HEK293 (cell line): ENCODE measurements at regions of chr22 and their contacts with region 1.

Region 1: DNA sequence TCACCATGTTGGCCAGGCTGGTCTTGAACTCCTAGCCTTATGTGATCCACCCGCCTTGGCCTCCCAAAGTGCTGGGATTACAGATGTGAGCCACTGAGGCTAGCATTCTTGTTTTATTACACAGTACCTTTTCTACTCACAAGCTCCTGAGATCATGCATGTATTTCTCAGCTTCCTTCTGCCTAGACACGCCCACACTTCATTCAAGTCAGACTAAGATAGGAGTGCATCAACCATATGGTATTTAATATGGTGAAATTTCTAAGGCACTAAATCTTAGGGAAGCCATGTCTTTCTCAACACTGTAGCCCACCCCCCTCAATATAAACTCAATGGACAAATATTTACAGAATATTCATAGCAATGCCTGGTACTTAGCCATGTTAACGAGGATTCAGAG is 62.1 kb downstream of the SLC25A17 start:
- H3K4me3 ChIP-seq: no peak overlapping the region
- H3K27ac ChIP-seq: no peak overlapping the region
- H3K4me1 ChIP-seq: no peaks in the 10 kb centered on the region
- CTCF ChIP-seq: no peak

Region 2: GRCh38 chr22:40499187-40499753 is 257.8 kb before region 1 on chr22:
- CTCF ChIA-PET with region 1: no interaction called
- POLR2A ChIA-PET with region 1: no interaction called
- H3K4me3 ChIP-seq: no peak overlapping the region
- H3K27ac ChIP-seq: peak overlapping the region; percentile 58; the same call in 1 of the 2 replicates
- H3K4me1 ChIP-seq: peaks cover 14% of the 10 kb centered on the region
- CTCF ChIP-seq: no peak

Region 3: DNA sequence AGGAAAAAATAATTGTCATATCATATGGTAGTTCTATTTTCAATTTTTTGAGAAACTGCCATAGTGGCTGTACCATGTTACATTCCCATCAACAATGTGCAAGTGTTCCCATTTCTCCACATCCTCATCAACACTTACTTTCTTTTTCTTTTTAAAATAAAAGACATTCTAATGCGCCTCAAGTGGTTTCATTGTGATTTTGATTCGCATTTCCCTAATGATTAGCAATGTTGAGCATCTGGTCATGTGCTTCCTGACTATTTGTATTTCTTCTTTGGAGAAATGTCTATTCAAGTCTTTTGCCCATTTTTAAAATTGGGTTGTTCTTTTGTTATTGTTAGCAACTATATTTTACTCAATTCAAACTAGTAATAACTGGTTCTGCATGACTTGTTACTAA is 69.4 kb before region 1 on chr22:
- CTCF ChIA-PET with region 1: interaction called, 86 read pairs
- POLR2A ChIA-PET with region 1: interaction called, 3 read pairs
- H3K4me3 ChIP-seq: no peak overlapping the region
- H3K27ac ChIP-seq: no peak overlapping the region
- H3K4me1 ChIP-seq: no peaks in the 10 kb centered on the region
- CTCF ChIP-seq: no peak

Region 4: DNA sequence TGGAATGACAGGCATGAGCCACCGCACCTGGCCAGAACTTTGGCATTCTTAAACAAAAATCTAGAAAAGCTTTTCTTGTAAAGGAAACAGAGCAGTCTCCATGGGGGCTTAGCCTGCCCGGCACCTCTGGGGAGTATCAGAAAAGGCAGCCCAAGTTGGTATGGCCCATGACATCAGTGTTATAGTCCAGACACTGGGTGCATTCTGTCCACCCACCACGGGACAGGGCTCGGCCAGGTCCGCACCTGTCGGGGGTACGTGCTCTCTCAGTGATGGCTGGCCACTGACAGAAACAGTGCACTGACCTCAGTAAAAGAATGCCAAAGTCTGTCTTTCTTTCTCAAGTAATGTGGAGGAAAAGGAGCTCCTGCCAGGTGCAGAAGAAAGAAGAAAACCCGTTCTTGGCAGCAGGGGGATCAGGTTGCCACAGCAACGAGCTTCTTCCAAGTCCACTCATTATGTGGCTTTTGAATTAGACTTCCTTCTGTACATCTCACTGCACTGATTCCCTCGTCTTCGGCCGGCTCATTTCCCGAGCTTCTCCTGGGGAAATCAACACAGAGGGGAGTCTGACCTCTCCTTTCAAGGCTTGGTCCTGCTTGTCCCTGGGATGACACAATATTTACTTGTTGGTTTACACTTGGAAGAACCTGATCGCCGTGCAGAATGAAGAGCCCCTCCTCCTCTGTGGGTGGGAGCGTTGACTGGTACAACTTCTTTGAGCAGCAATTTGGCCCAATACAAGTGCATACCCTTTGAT is 42.7 kb before region 1 on chr22:
- CTCF ChIA-PET with region 1: interaction called, 11 read pairs
- POLR2A ChIA-PET with region 1: interaction called, 6 read pairs
- H3K4me3 ChIP-seq: peak overlapping the region; percentile 4
- H3K27ac ChIP-seq: peak overlapping the region; percentile 71
- H3K4me1 ChIP-seq: peaks cover 32% of the 10 kb centered on the region
- CTCF ChIP-seq: no peak

Region 5: GRCh38 chr22:40728731-40729189 is 28.3 kb before region 1 on chr22:
- CTCF ChIA-PET with region 1: interaction called, 11 read pairs
- POLR2A ChIA-PET with region 1: interaction called, 4 read pairs
- H3K4me3 ChIP-seq: no peak overlapping the region
- H3K27ac ChIP-seq: peak overlapping the region; percentile 60
- H3K4me1 ChIP-seq: peaks cover 16% of the 10 kb centered on the region
- CTCF ChIP-seq: no peak

Region 6: GRCh38 chr22:40746428-40747220 is 10.4 kb before region 1 on chr22:
- CTCF ChIA-PET with region 1: interaction called, 16 read pairs
- POLR2A ChIA-PET with region 1: interaction called, 3 read pairs
- H3K4me3 ChIP-seq: no peak overlapping the region
- H3K27ac ChIP-seq: no peak overlapping the region
- H3K4me1 ChIP-seq: peaks cover 2% of the 10 kb centered on the region; the same call in 1 of the 2 replicates
- CTCF ChIP-seq: no peak

Region 7: GRCh38 chr22:40768206-40768605 is 11.1 kb after region 1 on chr22:
- CTCF ChIA-PET with region 1: interaction called, 12 read pairs
- POLR2A ChIA-PET with region 1: no interaction called
- H3K4me3 ChIP-seq: no peak overlapping the region
- H3K27ac ChIP-seq: no peak overlapping the region
- H3K4me1 ChIP-seq: no peaks in the 10 kb centered on the region
- CTCF ChIP-seq: no peak

Region 8: DNA sequence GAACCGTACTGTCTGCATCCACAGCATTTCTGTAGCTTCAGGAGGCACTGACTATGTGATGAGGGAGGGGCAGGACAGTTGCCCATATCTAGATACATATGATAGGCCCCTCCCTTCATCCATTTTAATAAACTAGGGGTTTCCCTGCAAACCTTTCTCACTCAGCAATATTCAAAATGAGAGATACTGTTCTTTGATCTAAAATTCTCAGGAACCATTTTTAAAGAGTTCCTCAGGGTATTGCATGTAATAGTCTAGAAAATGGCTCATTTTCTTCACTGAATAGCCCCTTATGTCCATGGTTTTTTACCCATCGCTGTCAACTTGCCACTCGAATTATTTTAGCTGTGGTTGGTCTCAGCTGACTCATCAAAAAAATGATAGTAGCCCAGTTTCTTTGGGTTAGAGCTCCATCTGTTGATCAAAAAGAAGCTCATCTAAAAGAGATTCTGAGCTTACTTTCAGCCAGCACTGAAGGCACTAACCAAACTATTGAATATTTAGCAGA is 141.8 kb after region 1 on chr22:
- CTCF ChIA-PET with region 1: interaction called, 14 read pairs
- POLR2A ChIA-PET with region 1: no interaction called
- H3K4me3 ChIP-seq: no peak overlapping the region
- H3K27ac ChIP-seq: no peak overlapping the region
- H3K4me1 ChIP-seq: no peaks in the 10 kb centered on the region
- CTCF ChIP-seq: 0 out of 2 replicates have a peak, but pooled peaks have one; percentile 37